ENCODE measurements at regions of chr13 and their contacts with region 1.

Region 1: DNA sequence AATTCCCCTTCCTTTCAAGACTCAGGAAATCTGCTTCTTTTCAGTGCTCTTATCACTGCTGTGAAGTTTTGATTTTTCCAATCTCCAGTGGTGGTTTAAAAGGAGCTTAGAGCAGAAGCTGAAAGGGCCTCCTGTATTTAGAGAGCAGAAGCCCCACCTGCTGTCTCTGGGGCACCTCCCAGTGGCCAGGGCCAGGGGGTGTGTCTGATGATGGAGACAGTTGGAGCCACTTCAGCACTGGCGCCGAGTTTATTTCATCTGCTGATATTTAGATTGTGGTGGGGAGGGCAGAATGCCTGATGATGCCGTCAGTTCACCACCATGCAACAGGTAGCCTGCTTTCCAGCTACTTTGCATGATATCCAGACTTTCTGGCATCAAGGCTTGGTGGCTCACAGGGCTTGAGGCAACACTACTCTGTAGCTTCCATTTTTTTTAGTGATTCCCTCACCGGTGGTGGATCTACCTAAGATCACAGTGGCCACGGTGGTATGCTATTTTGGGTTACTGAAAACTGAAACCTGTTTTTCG is 371.9 kb downstream of the KCNRG start:
- DNase-seq: peak in 4 of 5 donors; percentile 2 to 72 (median 10)
- H3K4me3 ChIP-seq: no peak overlapping the region
- H3K4me3 Mint-ChIP-seq: peak overlapping the region in 2 of 7 donors; percentile 39 to 44
- H3K27ac ChIP-seq: no peak overlapping the region
- H3K27ac Mint-ChIP-seq: no peak overlapping the region
- H3K4me1 ChIP-seq: no peaks in the 10 kb centered on the region
- H3K4me1 Mint-ChIP-seq: peaks cover 19 to 35% (median 32%) of the 10 kb centered on the region in 3 donors
- H3K27me3 ChIP-seq: no peaks in the 10 kb centered on the region
- H3K27me3 Mint-ChIP-seq: no peaks in the 10 kb centered on the region

Region 2: DNA sequence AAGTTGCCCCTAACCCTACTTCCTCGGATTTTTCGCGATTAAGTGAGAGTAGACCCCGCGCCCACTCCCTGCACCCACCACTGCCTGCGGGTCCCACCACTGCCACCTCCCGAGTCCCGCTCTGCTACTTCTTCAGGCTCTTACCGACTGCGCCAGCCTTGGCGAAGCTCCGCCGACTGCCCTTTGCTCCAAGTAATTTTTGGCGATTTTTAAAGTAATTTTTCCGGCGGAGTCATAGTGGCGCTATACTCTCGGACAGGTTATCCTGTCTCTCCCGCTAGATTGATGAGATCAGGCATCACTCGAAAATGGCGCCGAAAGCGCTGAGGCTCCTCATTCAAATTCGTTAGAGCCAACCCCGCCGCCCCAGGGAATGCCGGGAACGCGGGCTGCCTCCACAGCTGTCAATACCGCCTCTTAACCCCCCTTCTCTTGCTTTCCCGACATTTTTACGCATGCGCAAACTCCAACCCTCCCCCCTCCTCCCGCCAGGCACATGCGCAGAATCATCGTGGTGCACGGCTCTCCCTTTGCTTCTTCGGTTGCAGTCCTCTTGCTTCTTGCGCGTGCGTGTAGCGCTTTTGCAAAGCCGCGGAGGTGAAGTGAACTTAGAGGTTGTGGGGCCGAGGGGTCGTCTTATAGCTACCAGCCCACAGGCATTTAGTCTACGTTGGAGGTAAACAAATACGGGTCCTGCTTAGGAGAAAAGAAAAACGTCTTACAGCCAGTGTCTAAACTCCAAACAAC is 305.3 kb before region 1 on chr13:
- CTCF ChIA-PET with region 1: interaction called, 15 read pairs
- POLR2A ChIA-PET with region 1: interaction called, 4 read pairs
- DNase-seq: peak; percentile 97 to 99 (median 98)
- H3K4me3 ChIP-seq: peak overlapping the region; percentile 97
- H3K4me3 Mint-ChIP-seq: peak overlapping the region; percentile 93 to 100 (median 97)
- H3K27ac ChIP-seq: peak overlapping the region; percentile 78
- H3K27ac Mint-ChIP-seq: peak overlapping the region; percentile 82 to 98 (median 96)
- H3K4me1 ChIP-seq: peaks cover 21% of the 10 kb centered on the region
- H3K4me1 Mint-ChIP-seq: peaks cover 53 to 66% (median 59%) of the 10 kb centered on the region in 3 donors
- H3K27me3 ChIP-seq: no peaks in the 10 kb centered on the region
- H3K27me3 Mint-ChIP-seq: peaks cover 4 to 8% of the 10 kb centered on the region in 2 donors